ENCODE measurements at regions of chr14 and their contacts with region 1.

Region 1: DNA sequence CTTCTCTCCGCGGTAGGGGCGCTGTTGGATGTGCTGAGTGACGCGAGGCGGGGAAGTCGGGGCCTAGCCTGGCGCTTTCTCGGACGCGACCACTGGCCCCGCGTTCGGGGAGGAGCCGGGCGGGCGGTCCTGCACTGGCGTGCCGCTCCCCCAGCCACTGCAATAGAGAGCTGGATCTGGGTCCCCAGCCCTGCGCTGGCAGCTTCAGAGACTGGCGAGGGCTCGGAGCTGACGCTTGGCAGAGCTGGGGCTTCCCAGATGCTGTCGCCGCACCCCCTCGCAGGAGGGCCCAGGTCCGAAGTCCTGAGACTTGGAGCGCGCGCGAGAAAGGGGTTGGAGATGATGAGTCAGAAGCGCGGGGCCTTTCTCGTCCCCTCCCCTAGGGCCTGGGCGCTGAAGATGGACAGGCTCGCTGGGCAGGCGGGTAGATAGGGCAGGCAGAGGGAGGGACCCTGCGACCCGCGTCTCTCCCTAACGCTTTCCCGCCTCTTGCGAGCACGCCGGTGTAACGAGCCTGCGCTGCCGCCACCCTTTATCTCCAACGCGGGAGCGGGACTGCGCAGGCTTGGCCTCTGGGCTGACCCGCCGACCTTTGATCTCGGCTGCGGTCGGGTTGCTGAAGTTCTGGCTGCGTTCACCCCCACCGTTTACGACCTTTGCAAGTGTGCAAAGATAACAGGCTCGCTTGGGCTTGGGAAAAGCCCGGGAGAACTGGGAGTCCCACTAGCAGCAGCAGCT is 3.0 kb downstream of the TMEM253 start:
- DNase-seq: peak; percentile 94

Region 2: GRCh38 chr14:21039585-21040369 is 64.1 kb before region 1 on chr14:
- CTCF ChIA-PET with region 1: interaction called, 12 read pairs
- POLR2A ChIA-PET with region 1: interaction called, 3 read pairs
- DNase-seq: peak; percentile 75

Region 3: DNA sequence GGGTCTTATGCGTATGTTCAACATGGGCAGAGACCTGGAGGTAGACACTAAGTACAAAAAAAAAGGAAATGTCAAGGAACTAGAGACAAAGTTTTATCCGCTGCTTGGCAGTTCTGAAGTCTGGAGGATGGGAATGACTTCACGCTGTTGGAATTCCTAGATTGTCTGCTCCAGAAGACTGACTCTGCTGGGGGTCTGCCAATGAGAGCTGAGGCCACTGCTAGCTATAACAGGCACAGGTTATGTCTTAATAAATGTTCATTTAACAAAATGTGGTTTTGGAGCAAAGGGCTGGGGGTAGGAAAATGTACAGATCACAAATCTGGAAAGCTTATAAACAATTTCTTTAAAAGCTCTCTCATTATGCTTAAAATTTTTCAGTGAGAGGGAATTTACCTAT is 40.4 kb before region 1 on chr14:
- CTCF ChIA-PET with region 1: interaction called, 73 read pairs
- POLR2A ChIA-PET with region 1: interaction called, 45 read pairs
- DNase-seq: peak; percentile 40

Region 4: DNA sequence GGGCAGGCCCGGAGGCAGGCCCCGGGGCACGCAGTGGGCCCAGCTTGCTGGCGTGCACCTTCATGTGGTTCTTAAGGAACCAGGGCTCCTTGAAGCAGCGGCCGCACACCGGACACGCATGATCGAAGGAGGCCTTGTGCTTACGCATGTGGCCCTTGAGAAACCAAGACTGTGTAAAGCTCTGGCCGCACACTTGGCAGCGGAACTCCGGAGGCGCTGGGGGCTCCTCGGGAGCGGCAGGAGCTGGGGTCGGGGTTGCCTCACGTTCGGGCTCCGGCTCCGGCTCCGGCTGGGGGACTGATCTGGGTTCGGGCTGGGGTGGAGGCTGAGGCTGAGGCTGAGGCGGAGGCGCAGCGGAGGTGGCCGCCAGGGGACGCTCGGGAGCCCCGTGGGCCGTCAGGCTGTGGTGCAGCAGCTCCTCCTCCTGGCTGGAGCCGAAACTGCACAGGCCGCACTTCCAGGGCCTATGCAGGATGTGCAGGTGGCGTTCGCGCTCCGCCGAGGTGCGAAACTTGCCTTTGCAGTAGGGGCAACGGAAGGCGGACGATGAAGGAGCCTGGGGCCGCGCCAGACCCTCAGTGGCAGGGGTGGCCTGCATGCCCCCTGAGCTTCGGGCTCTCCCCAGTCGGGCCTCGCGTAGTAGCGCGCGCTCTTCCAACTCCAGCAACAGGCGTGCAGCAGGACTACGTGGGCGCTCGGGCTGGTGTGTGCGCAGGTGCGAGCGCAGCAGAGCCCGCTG is 11.4 kb before region 1 on chr14:
- CTCF ChIA-PET with region 1: interaction called, 58 read pairs
- POLR2A ChIA-PET with region 1: interaction called, 32 read pairs
- DNase-seq: peak; percentile 88